ENCODE measurements at regions of chr4 and their contacts with region 1.

Region 1: DNA sequence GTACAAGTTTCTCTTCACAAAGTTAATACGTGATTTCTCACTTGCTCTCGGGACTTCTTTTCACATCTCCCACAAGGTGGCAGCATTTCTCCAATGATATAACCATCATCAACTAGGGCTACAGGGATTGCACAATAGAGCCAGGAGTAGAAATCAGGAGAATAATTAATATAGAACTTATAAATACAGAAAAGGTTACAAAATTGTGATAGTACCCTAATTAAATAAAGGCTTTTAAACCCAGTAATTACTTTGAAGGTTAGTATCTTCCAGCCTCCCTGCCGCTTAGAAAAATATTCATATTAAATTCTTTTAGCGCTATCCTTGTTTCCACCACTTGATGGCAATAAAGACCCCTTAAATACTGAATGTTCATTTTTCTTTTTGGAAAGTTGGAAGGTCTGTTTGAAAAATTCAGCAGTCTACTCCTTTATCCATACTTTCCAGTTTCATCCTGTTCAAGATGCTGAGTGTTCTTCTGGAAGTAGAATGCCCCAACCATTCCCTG is 65.8 kb downstream of the RASGEF1B start:
- DNase-seq: peak in 4 of 10 donors; percentile 24 to 57 (median 48)
- H3K4me3 ChIP-seq: peak overlapping the region in 47 of 59 donors; percentile 10 to 59 (median 35)
- H3K27ac ChIP-seq: peak overlapping the region in 25 of 59 donors; percentile 17 to 80 (median 55)
- H3K27me3 ChIP-seq: no peaks in the 10 kb centered on the region
- CTCF ChIP-seq: peak; percentile 77 to 100 (median 95)

Region 2: GRCh38 chr4:81290813-81291212 is 115.1 kb before region 1 on chr4:
- intact Hi-C with region 1: no loop called
- DNase-seq: no peak
- H3K4me3 ChIP-seq: no peak overlapping the region
- H3K27ac ChIP-seq: no peak overlapping the region
- H3K27me3 ChIP-seq: peaks cover 0 to 15% (median 0%) of the 10 kb centered on the region in 45 donors
- CTCF ChIP-seq: no peak

Region 3: GRCh38 chr4:81688085-81688484 is 282.1 kb after region 1 on chr4:
- intact Hi-C with region 1: loop called in 1 of 2 experiments (anchors 5 kb)
- DNase-seq: peak in 1 of 10 donors; percentile 14
- H3K4me3 ChIP-seq: no peak overlapping the region
- H3K27ac ChIP-seq: no peak overlapping the region
- H3K27me3 ChIP-seq: no peaks in the 10 kb centered on the region
- CTCF ChIP-seq: peak in 48 of 56 donors; percentile 10 to 69 (median 44)

Region 4: DNA sequence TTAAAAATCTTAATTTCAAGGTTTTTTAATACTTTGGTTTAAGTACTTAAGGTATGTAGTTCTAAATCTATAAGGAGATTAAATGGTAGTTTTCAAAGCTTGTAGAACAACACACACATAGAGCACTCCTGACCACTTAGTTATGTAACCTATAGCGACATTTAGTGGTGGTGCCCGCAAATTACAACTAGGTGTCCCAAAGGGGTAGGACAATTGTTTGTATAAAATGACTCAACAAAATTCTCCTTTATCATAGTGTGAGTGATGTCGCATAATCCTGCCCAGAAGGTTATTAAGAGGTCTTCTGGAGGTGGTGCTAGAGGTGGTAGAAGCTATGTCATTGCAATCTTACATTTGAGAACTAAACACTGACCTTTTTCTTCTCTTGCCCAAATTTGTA is 438.8 kb after region 1 on chr4:
- intact Hi-C with region 1: loop called (anchors 2 to 5 kb)
- DNase-seq: peak in 8 of 10 donors; percentile 46 to 88 (median 62)
- H3K4me3 ChIP-seq: no peak overlapping the region
- H3K27ac ChIP-seq: no peak overlapping the region
- H3K27me3 ChIP-seq: no peaks in the 10 kb centered on the region
- CTCF ChIP-seq: peak; percentile 63 to 96 (median 85)

Region 5: DNA sequence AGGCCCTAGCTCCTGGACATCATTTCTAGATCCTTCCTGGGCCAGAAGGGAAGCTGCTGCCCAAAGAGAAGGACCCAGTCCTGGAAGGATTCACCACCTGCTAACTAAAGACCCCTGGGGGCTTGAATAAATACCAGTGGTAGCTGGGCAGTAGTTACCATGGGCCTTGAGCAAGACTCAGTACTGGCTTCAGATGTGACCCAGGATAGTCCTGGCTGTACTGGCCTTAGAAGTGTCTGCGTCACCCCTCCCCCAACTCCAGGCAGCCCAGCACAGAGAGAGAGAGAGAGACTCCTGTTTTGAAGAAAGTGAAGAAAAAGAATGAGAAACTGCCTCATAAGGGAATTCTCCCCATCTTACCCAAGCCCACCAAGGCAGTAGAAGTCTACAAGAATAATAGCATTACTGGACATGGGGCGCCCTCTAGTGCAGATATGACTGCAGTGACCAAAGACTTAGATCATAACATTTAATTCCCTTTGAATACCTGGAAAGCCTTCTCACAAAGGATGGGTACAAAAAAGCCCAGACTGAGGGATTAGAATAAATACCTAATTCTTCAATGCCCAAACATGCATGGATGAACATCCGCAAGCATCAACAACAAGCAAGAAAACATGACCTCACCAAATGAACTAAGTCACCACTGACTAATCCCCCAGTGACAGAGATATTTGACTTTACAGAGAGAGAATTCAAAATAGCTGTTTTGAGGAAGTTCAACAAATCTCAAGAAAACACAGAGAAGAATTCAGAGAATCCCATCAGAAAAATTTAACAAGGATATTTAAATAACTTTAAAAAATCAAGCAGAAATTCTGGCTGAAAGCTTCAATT is 796.1 kb after region 1 on chr4:
- intact Hi-C with region 1: loop called in 1 of 2 experiments (anchors 5 kb)
- DNase-seq: peak in 1 of 10 donors; percentile 30
- H3K4me3 ChIP-seq: no peak overlapping the region
- H3K27ac ChIP-seq: no peak overlapping the region
- H3K27me3 ChIP-seq: no peaks in the 10 kb centered on the region
- CTCF ChIP-seq: peak in 50 of 56 donors; percentile 20 to 64 (median 44)

Region 6: GRCh38 chr4:82268050-82268825 is 862.3 kb after region 1 on chr4:
- intact Hi-C with region 1: loop called (anchors 1 to 5 kb)
- DNase-seq: peak in 9 of 10 donors; percentile 46 to 69 (median 58)
- H3K4me3 ChIP-seq: peak overlapping the region in 9 of 59 donors; percentile 1 to 25 (median 10)
- H3K27ac ChIP-seq: peak overlapping the region in 13 of 59 donors; percentile 3 to 55 (median 36)
- H3K27me3 ChIP-seq: peaks cover 0 to 6% (median 0%) of the 10 kb centered on the region in 45 donors
- CTCF ChIP-seq: peak; percentile 50 to 93 (median 78)

Region 7: GRCh38 chr4:82360298-82361177 is 954.6 kb after region 1 on chr4:
- intact Hi-C with region 1: loop called in 1 of 2 experiments (anchors 5 kb)
- DNase-seq: no peak
- H3K4me3 ChIP-seq: no peak overlapping the region
- H3K27ac ChIP-seq: peak overlapping the region in 4 of 59 donors; percentile 2 to 35 (median 19)
- H3K27me3 ChIP-seq: no peaks in the 10 kb centered on the region
- CTCF ChIP-seq: peak in 55 of 56 donors; percentile 35 to 74 (median 60)

Measured in dorsolateral prefrontal cortex (tissue), 120 donors.